K562 (cell line): ENCODE measurements at regions of chr3 and their contacts with region 1.

Region 1: GRCh38 chr3:194486540-194487288 is at the start of gene ATP13A3:
- DNase-seq: peak; percentile 92 to 97 (median 96)
- ATAC-seq: peak; percentile 84
- H3K4me3 ChIP-seq: peak within 1 kb of the TSS; percentile 66
- H3K27ac ChIP-seq: peak within 1 kb of the TSS; percentile 93
- H3K4me1 ChIP-seq: peaks cover 48 to 60% of the 10 kb centered on the region in 2 experiments
- H3K27me3 ChIP-seq: no peaks in the 10 kb centered on the region
- CTCF ChIP-seq: no peak
- EP300 ChIP-seq: no peak
- POLR2A ChIP-seq: peak; percentile 70
- RAD21 ChIP-seq: no peak
- polyA plus RNA-seq, gene ATP13A3: 16.6 to 16.8 TPM

Region 2: GRCh38 chr3:194497821-194498598 is 11.3 kb after region 1 on chr3:
- CTCF ChIA-PET with region 1: no interaction called
- POLR2A ChIA-PET with region 1: interaction called, 12 read pairs
- in situ Hi-C with region 1: no loop called
- intact Hi-C with region 1: no loop called
- DNase-seq: no peak
- ATAC-seq: peak; percentile 49
- H3K4me3 ChIP-seq: no peak overlapping the region
- H3K27ac ChIP-seq: no peak overlapping the region
- H3K4me1 ChIP-seq: peaks cover 0 to 10% of the 10 kb centered on the region in 2 experiments; a peak in 4 of 5 replicates
- H3K27me3 ChIP-seq: no peaks in the 10 kb centered on the region
- CTCF ChIP-seq: no peak
- EP300 ChIP-seq: no peak
- POLR2A ChIP-seq: no peak
- RAD21 ChIP-seq: no peak

Region 3: GRCh38 chr3:194521514-194522260 is 35.0 kb after region 1 on chr3:
- CTCF ChIA-PET with region 1: no interaction called
- POLR2A ChIA-PET with region 1: interaction called, 4 read pairs
- in situ Hi-C with region 1: no loop called
- intact Hi-C with region 1: loop called (anchors 5 kb)
- DNase-seq: no peak
- ATAC-seq: no peak
- H3K4me3 ChIP-seq: no peak overlapping the region
- H3K27ac ChIP-seq: no peak overlapping the region; the same call in 2 of the 3 replicates
- H3K4me1 ChIP-seq: peaks cover 0 to 11% of the 10 kb centered on the region in 2 experiments; a peak in 4 of 5 replicates
- H3K27me3 ChIP-seq: no peaks in the 10 kb centered on the region
- CTCF ChIP-seq: no peak
- EP300 ChIP-seq: no peak
- POLR2A ChIP-seq: no peak
- RAD21 ChIP-seq: no peak